ENCODE measurements at regions of chr2 and their contacts with region 1.

Region 1: GRCh38 chr2:40451918-40452605 is at the start of gene SLC8A1:
- DNase-seq: peak in 37 of 42 donors; percentile 17 to 73 (median 48)

Region 2: DNA sequence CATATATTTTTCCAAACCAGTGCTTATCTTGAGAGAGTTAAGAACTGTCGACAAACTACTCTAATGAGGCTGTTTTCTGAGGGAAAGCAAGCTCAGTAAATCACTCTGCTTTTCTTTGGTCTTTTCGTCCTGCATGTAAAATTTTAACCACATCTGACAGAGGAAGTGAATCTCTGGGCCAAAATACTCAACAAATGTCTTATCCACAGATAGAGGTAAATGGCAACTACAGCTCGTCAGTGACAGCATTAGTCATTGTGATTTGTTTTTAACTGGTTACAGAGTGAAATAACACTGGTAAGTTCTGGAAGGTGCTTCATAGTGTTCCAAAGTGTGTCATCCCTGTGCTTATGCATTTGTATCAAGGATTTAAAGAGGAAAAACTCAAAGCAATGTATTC is 82.5 kb after region 1 on chr2:
- intact Hi-C with region 1: no loop called
- DNase-seq: no peak

Region 3: GRCh38 chr2:40546439-40547191 is 94.6 kb after region 1 on chr2:
- intact Hi-C with region 1: no loop called
- DNase-seq: no peak

Region 4: GRCh38 chr2:41709702-41710599 is 1257.9 kb after region 1 on chr2:
- intact Hi-C with region 1: loop called (anchors 10 kb)
- DNase-seq: no peak

Measured in head of caudate nucleus (tissue), 42 donors.